ENCODE measurements at regions of chr17 and their contacts with region 1.

Region 1: DNA sequence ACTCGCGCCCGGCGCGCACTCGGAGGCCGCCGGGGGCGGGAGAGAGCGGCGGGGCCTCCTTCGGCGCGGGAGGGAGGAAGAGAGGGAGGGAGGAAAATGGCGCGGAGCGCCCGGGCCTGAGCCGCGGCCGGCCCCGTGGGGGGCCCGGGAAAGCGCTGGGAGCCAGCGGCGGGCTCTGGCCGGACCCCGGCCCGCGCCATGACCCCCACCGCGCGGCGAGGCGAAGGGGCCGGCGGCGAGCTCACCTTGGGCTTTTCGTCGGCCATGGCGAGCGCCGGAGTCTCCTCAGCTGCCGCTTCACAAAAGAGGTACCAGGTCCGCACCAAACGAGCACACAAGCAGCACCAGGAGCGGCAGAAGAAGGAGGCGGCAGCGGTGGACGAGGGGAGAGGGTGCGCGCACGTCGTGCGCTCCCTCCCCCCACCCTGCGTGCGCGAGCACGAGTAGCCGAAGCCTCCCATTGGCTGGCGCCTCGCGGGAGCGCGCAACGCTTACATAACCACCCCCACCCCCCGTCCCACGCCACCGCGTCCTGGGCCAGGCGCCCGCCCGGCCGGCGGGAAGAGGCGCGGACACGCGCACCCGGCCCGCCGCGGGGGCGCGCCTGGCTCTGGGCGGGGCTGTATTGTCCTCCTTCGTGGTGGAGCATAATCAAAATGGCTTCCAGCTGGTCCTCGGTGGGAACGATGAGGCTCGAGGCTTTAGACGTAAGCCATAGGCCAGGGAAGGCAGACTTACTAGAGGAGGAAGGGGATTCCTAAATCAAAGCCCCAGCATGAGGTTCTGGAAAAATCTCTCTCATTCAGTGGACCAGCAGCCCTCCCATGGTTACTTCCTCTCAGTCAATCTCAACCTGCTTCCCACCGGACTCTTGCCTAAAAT is at the start of gene SUMO2:
- DNase-seq: peak; percentile 96
- ATAC-seq: peak; percentile 82
- H3K4me3 Mint-ChIP-seq: peak within 1 kb of the TSS; percentile 86
- H3K27ac Mint-ChIP-seq: peak within 1 kb of the TSS; percentile 97
- H3K4me1 Mint-ChIP-seq: peaks cover 38% of the 10 kb centered on the region
- H3K27me3 Mint-ChIP-seq: no peaks in the 10 kb centered on the region
- CTCF ChIP-seq: no peak
- total RNA-seq, gene SUMO2: 365 and 394 TPM in 2 replicates

Region 2: GRCh38 chr17:75034236-75034908 is 148.4 kb before region 1 on chr17:
- CTCF ChIA-PET with region 1: no interaction called
- POLR2A ChIA-PET with region 1: no interaction called
- intact Hi-C with region 1: loop called (anchors 5 kb)
- DNase-seq: peak; percentile 76
- ATAC-seq: peak; percentile 72
- H3K4me3 Mint-ChIP-seq: peak overlapping the region; percentile 91
- H3K27ac Mint-ChIP-seq: peak overlapping the region; percentile 89
- H3K4me1 Mint-ChIP-seq: peaks cover 34% of the 10 kb centered on the region
- H3K27me3 Mint-ChIP-seq: peaks cover 1% of the 10 kb centered on the region
- CTCF ChIP-seq: no peak

Region 3: GRCh38 chr17:75059369-75060345 is 123.2 kb before region 1 on chr17:
- CTCF ChIA-PET with region 1: no interaction called
- POLR2A ChIA-PET with region 1: no interaction called
- intact Hi-C with region 1: loop called (anchors 5 kb)
- DNase-seq: no peak
- ATAC-seq: no peak
- H3K4me3 Mint-ChIP-seq: no peak overlapping the region
- H3K27ac Mint-ChIP-seq: no peak overlapping the region
- H3K4me1 Mint-ChIP-seq: no peaks in the 10 kb centered on the region
- H3K27me3 Mint-ChIP-seq: no peaks in the 10 kb centered on the region
- CTCF ChIP-seq: no peak

Region 4: GRCh38 chr17:75124041-75124818 is 58.6 kb before region 1 on chr17:
- CTCF ChIA-PET with region 1: no interaction called
- POLR2A ChIA-PET with region 1: interaction called, 11 read pairs
- intact Hi-C with region 1: no loop called
- DNase-seq: no peak
- ATAC-seq: peak; percentile 75
- H3K4me3 Mint-ChIP-seq: no peak overlapping the region
- H3K27ac Mint-ChIP-seq: peak overlapping the region; percentile 41
- H3K4me1 Mint-ChIP-seq: peaks cover 36% of the 10 kb centered on the region
- H3K27me3 Mint-ChIP-seq: no peaks in the 10 kb centered on the region
- CTCF ChIP-seq: no peak

Region 5: GRCh38 chr17:75154195-75155106 is 28.4 kb before region 1 on chr17 and contains the start of gene JPT1:
- CTCF ChIA-PET with region 1: no interaction called
- POLR2A ChIA-PET with region 1: interaction called, 7 read pairs
- intact Hi-C with region 1: loop called (anchors 1 kb)
- DNase-seq: peak; percentile 85
- ATAC-seq: peak; percentile 97
- H3K4me3 Mint-ChIP-seq: peak within 1 kb of the TSS; percentile 91
- H3K27ac Mint-ChIP-seq: peak within 1 kb of the TSS; percentile 77
- H3K4me1 Mint-ChIP-seq: peaks cover 34% of the 10 kb centered on the region
- H3K27me3 Mint-ChIP-seq: no peaks in the 10 kb centered on the region
- CTCF ChIP-seq: no peak
- total RNA-seq, gene JPT1: 70.5 and 72.9 TPM in 2 replicates

Region 6: GRCh38 chr17:75325827-75326225 is 143.0 kb after region 1 on chr17:
- CTCF ChIA-PET with region 1: no interaction called
- POLR2A ChIA-PET with region 1: no interaction called
- intact Hi-C with region 1: no loop called
- DNase-seq: no peak
- ATAC-seq: no peak
- H3K4me3 Mint-ChIP-seq: peak overlapping the region; percentile 57
- H3K27ac Mint-ChIP-seq: peak overlapping the region; percentile 88
- H3K4me1 Mint-ChIP-seq: peaks cover 82% of the 10 kb centered on the region
- H3K27me3 Mint-ChIP-seq: no peaks in the 10 kb centered on the region
- CTCF ChIP-seq: no peak

Measured in activated B cell treated with CpG ODN at 0.5 μM for 24 hours (primary cell).